ENCODE measurements at regions of chr12 and their contacts with region 1.

Region 1: GRCh38 chr12:56127888-56128669 is at the start of gene ESYT1:
- DNase-seq: peak; percentile 99
- H3K4me3 ChIP-seq: peak within 1 kb of the TSS; percentile 75
- H3K4me3 Mint-ChIP-seq: peak within 1 kb of the TSS; percentile 89
- H3K27ac Mint-ChIP-seq: peak within 1 kb of the TSS; percentile 91
- H3K4me1 ChIP-seq: peaks cover 29% of the 10 kb centered on the region
- H3K4me1 Mint-ChIP-seq: peaks cover 35% of the 10 kb centered on the region
- H3K27me3 ChIP-seq: no peaks in the 10 kb centered on the region
- H3K27me3 Mint-ChIP-seq: no peaks in the 10 kb centered on the region
- CTCF ChIP-seq: no peak
- total RNA-seq, gene ESYT1: 70.4 and 79.0 TPM in 2 replicates

Region 2: DNA sequence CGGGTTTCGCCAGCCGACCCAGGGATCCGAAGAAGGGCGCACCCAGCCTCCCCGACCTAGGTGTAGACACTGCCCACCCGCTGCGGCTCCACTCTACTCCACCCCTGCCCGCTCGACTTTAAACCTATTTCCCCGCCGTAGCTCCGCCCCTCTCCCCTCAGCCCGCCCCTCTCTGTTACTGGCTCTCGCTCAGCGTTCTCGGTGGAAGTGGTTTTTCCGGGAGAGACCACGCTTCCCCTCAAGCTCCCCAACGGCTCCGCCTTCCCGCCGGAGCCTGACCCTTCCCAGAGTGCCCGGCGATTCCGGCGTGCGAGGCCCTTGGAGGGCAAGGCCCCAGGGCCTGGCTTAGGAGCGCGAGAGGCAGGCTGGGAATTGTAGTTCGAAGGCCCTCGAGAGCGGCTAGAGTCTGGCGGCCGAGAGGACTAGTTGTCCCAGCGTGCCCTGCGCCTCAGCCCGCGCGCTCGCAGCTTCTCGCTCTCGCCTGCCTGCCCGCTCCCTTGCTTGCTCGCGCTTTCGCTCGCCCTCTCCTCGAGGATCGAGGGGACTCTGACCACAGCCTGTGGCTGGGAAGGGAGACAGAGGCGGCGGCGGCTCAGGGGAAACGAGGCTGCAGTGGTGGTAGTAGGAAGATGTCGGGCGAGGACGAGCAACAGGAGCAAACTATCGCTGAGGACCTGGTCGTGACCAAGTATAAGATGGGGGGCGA is 23.8 kb before region 1 on chr12 and contains the start of gene PA2G4:
- CTCF ChIA-PET with region 1: interaction called, 5 read pairs
- POLR2A ChIA-PET with region 1: interaction called, 11 read pairs
- intact Hi-C with region 1: no loop called
- DNase-seq: peak; percentile 99
- H3K4me3 ChIP-seq: peak within 1 kb of the TSS; percentile 68
- H3K4me3 Mint-ChIP-seq: peak within 1 kb of the TSS; percentile 98
- H3K27ac Mint-ChIP-seq: peak within 1 kb of the TSS; percentile 99
- H3K4me1 ChIP-seq: peaks cover 22% of the 10 kb centered on the region
- H3K4me1 Mint-ChIP-seq: peaks cover 9% of the 10 kb centered on the region
- H3K27me3 ChIP-seq: no peaks in the 10 kb centered on the region; the same call in 1 of the 2 replicates
- H3K27me3 Mint-ChIP-seq: no peaks in the 10 kb centered on the region
- CTCF ChIP-seq: no peak
- total RNA-seq, gene PA2G4: 178 and 190 TPM in 2 replicates

Region 3: GRCh38 chr12:56152318-56153033 is 24.4 kb after region 1 on chr12 and contains the start of gene MYL6B:
- CTCF ChIA-PET with region 1: interaction called, 16 read pairs
- POLR2A ChIA-PET with region 1: interaction called, 24 read pairs
- intact Hi-C with region 1: loop called (anchors 1 kb)
- DNase-seq: peak; percentile 88 to 92
- H3K4me3 ChIP-seq: peak within 1 kb of the TSS; percentile 73
- H3K4me3 Mint-ChIP-seq: peak within 1 kb of the TSS; percentile 87
- H3K27ac Mint-ChIP-seq: peak within 1 kb of the TSS; percentile 98
- H3K4me1 ChIP-seq: peaks cover 12% of the 10 kb centered on the region
- H3K4me1 Mint-ChIP-seq: peaks cover 20% of the 10 kb centered on the region
- H3K27me3 ChIP-seq: no peaks in the 10 kb centered on the region
- H3K27me3 Mint-ChIP-seq: no peaks in the 10 kb centered on the region
- CTCF ChIP-seq: no peak
- total RNA-seq, gene MYL6B: 40.5 and 44.8 TPM in 2 replicates

Region 4: DNA sequence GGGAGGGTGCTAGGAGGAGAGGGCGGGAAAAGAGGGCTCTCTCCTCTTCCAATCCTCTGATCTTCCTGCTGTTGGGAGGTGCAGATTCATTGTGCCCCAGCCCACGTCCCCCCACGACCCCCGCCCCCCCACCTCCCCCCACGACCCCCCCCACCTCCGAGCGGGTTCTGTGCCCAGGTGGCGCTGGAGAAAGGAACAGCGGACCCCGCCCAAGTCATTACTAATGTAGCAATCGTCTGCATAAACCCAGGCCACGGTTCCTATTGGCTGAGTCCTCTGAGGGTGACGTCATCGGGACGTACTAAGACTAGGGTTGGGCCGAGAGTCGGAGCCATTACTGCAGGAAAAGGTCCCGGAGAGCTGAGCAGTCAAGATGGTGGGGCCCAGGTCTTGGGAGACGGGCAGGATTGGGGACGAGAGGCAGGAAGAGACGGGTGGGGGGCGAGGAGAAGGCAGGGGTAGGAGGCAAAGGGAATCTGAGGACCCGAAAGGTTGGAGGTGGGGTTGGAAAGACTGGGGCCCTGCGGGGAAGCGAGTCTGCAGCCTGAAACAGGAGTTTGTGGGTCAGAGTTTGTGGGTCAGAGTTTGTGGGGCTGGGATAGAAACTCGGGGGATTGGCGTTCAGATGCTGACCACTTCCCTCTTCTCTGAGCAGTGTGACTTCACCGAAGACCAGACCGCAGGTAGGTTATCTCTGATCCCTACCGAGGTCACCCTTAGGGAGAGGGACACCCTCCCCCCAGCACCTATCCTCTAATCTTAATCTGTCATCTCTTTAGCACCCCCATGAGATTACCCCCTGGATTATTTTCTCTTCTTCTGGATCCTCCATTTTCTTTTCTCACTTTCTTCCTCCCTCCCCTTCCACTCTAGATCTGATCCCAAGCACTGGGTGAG is 30.2 kb after region 1 on chr12 and contains the start of gene MYL6:
- CTCF ChIA-PET with region 1: interaction called, 14 read pairs
- POLR2A ChIA-PET with region 1: interaction called, 27 read pairs
- intact Hi-C with region 1: loop called (anchors 1 kb)
- DNase-seq: peak; percentile 96 to 98
- H3K4me3 ChIP-seq: peak within 1 kb of the TSS; percentile 59
- H3K4me3 Mint-ChIP-seq: peak within 1 kb of the TSS; percentile 79
- H3K27ac Mint-ChIP-seq: peak within 1 kb of the TSS; percentile 88
- H3K4me1 ChIP-seq: peaks cover 16% of the 10 kb centered on the region
- H3K4me1 Mint-ChIP-seq: peaks cover 33% of the 10 kb centered on the region
- H3K27me3 ChIP-seq: no peaks in the 10 kb centered on the region
- H3K27me3 Mint-ChIP-seq: no peaks in the 10 kb centered on the region
- CTCF ChIP-seq: no peak
- total RNA-seq, gene MYL6: 960 and 1,174 TPM in 2 replicates

Region 5: GRCh38 chr12:56224102-56224701 is 96.1 kb after region 1 on chr12 and contains the start of gene NABP2:
- CTCF ChIA-PET with region 1: interaction called, 9 read pairs
- POLR2A ChIA-PET with region 1: interaction called, 11 read pairs
- intact Hi-C with region 1: loop called (anchors 1 kb)
- DNase-seq: peak; percentile 98
- H3K4me3 ChIP-seq: peak within 1 kb of the TSS; percentile 72
- H3K4me3 Mint-ChIP-seq: peak within 1 kb of the TSS; percentile 99
- H3K27ac Mint-ChIP-seq: peak within 1 kb of the TSS; percentile 98
- H3K4me1 ChIP-seq: peaks cover 6% of the 10 kb centered on the region
- H3K4me1 Mint-ChIP-seq: peaks cover under 1% of the 10 kb centered on the region
- H3K27me3 ChIP-seq: no peaks in the 10 kb centered on the region
- H3K27me3 Mint-ChIP-seq: no peaks in the 10 kb centered on the region
- CTCF ChIP-seq: peak; percentile 82 to 89
- total RNA-seq, gene NABP2: 32.1 and 37.7 TPM in 2 replicates

Region 6: GRCh38 chr12:56258057-56258819 is 130.2 kb after region 1 on chr12 and contains the start of gene ANKRD52:
- CTCF ChIA-PET with region 1: no interaction called
- POLR2A ChIA-PET with region 1: interaction called, 6 read pairs
- intact Hi-C with region 1: loop called (anchors 2 kb)
- DNase-seq: peak; percentile 50 to 88
- H3K4me3 ChIP-seq: peak within 1 kb of the TSS; percentile 72
- H3K4me3 Mint-ChIP-seq: peak within 1 kb of the TSS; percentile 74
- H3K27ac Mint-ChIP-seq: peak within 1 kb of the TSS; percentile 56
- H3K4me1 ChIP-seq: peaks cover 38% of the 10 kb centered on the region
- H3K4me1 Mint-ChIP-seq: peaks cover 30% of the 10 kb centered on the region
- H3K27me3 ChIP-seq: no peaks in the 10 kb centered on the region
- H3K27me3 Mint-ChIP-seq: no peaks in the 10 kb centered on the region
- CTCF ChIP-seq: peak; percentile 50 to 59
- total RNA-seq, gene ANKRD52: 34.6 and 46.3 TPM in 2 replicates

Measured in Caco-2 (cell line).